Naive thymus-derived CD4-positive, alpha-beta T cell (primary cell): ENCODE measurements at regions of chr4 and their contacts with region 1.

Region 1: DNA sequence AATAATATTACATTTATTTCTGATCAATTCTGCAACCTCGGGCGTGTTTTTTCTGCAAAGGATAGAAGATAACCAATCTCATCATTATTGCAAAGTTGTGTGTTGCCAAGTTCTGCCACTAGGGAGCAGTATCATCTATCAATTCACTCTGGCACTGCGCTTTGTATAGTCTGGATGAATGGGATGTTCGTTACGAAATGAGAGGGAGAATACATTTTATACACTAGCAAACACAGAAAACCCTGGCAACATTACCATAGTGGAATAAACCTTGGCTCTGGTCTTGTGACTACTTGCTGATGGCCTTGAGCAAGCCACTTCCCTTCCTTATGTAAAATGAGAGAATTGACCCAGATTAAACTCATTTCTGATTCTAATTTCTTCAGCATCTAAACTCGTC is 97.5 kb upstream of the ZNF518B start:
- DNase-seq: peak in 6 of 9 donors; percentile 12 to 55 (median 40)
- ATAC-seq: peak; percentile 76
- H3K4me3 ChIP-seq: no peak overlapping the region
- H3K4me3 Mint-ChIP-seq: peak overlapping the region in 3 of 10 donors; percentile 2 to 32 (median 27)
- H3K27ac ChIP-seq: no peak overlapping the region
- H3K27ac Mint-ChIP-seq: no peak overlapping the region
- H3K4me1 ChIP-seq: no peaks in the 10 kb centered on the region
- H3K4me1 Mint-ChIP-seq: peaks cover 4 to 8% (median 5%) of the 10 kb centered on the region in 7 donors
- H3K27me3 ChIP-seq: no peaks in the 10 kb centered on the region
- H3K27me3 Mint-ChIP-seq: peaks cover 6 to 25% (median 19%) of the 10 kb centered on the region in 5 donors

Region 2: DNA sequence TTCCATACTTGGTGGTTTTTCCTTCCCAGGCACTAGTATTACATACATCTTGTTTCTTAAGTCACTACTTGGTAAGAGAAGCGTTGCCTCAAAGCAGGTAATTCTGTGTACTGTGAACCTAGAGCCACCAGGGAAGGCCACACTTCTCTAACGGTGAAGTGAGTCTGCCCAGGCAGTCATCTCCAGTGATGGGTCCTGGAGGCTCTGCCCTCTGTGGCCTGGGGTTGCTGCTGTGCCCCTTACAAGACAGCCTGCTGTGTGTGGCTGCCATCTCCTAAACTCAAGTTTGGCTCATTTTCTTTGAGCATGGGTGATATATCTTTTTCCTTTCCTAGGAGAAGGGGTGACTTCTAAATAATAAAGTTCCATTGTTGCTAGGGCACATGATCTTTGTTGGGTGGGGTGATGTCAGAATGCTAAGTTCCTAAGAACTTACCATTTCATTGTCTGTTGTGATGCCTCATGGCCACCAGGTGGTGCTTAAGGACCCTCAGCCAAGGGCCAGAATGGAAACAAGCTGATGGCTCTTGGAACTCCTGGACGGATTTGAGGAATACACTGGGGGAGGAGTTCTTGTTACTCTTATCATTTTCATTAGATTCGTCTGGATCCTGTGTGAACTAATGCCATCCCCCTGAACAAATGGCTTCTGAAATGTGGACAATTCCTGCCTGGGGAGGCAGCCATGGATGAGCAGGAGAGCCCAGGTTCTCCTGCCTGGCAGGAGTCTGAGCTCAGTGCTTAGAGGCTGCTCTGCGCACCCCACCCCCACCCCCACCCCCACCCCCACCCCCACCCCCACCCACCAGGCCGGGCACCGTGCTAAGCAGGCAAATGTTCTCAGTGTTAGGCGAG is 397.0 kb before region 1 on chr4:
- CTCF ChIA-PET with region 1: interaction called, 7 read pairs
- POLR2A ChIA-PET with region 1: no interaction called
- intact Hi-C with region 1: loop called (anchors 1 kb)
- DNase-seq: peak in 7 of 9 donors; percentile 4 to 37 (median 32)
- ATAC-seq: peak; percentile 63
- H3K4me3 ChIP-seq: no peak overlapping the region
- H3K4me3 Mint-ChIP-seq: peak overlapping the region in 5 of 10 donors; percentile 19 to 48 (median 25)
- H3K27ac ChIP-seq: no peak overlapping the region
- H3K27ac Mint-ChIP-seq: peak overlapping the region in 7 of 9 donors; percentile 12 to 86 (median 60)
- H3K4me1 ChIP-seq: peaks cover 8 to 39% of the 10 kb centered on the region in 2 donors
- H3K4me1 Mint-ChIP-seq: peaks cover 14 to 57% (median 50%) of the 10 kb centered on the region in 7 donors
- H3K27me3 ChIP-seq: no peaks in the 10 kb centered on the region
- H3K27me3 Mint-ChIP-seq: no peaks in the 10 kb centered on the region

Region 3: GRCh38 chr4:10715696-10716095 is 161.0 kb after region 1 on chr4:
- CTCF ChIA-PET with region 1: no interaction called
- POLR2A ChIA-PET with region 1: no interaction called
- intact Hi-C with region 1: loop called in 1 of 2 experiments (anchors 1 kb)
- DNase-seq: no peak
- ATAC-seq: no peak
- H3K4me3 ChIP-seq: no peak overlapping the region
- H3K4me3 Mint-ChIP-seq: no peak overlapping the region
- H3K27ac ChIP-seq: no peak overlapping the region
- H3K27ac Mint-ChIP-seq: no peak overlapping the region
- H3K4me1 ChIP-seq: no peaks in the 10 kb centered on the region
- H3K4me1 Mint-ChIP-seq: peaks cover 0 to 5% (median 0%) of the 10 kb centered on the region in 7 donors
- H3K27me3 ChIP-seq: no peaks in the 10 kb centered on the region
- H3K27me3 Mint-ChIP-seq: peaks cover 0 to 7% (median 3%) of the 10 kb centered on the region in 5 donors

Region 4: GRCh38 chr4:11428899-11429698 is 874.4 kb after region 1 on chr4:
- CTCF ChIA-PET with region 1: interaction called, 4 read pairs
- POLR2A ChIA-PET with region 1: no interaction called
- intact Hi-C with region 1: loop called (anchors 1 to 10 kb)
- DNase-seq: peak in 6 of 9 donors; percentile 8 to 52 (median 21)
- ATAC-seq: peak; percentile 83
- H3K4me3 ChIP-seq: peak overlapping the region; percentile 43
- H3K4me3 Mint-ChIP-seq: peak overlapping the region; percentile 69 to 84 (median 77)
- H3K27ac ChIP-seq: no peak overlapping the region
- H3K27ac Mint-ChIP-seq: no peak overlapping the region
- H3K4me1 ChIP-seq: peaks cover 0 to 8% of the 10 kb centered on the region in 2 donors
- H3K4me1 Mint-ChIP-seq: peaks cover 8 to 23% (median 14%) of the 10 kb centered on the region in 7 donors
- H3K27me3 ChIP-seq: no peaks in the 10 kb centered on the region
- H3K27me3 Mint-ChIP-seq: peaks cover 18 to 74% (median 32%) of the 10 kb centered on the region in 5 donors